MCF 10A (cell line): ENCODE measurements at regions of chr19 and their contacts with region 1.

Region 1: GRCh38 chr19:43747557-43748204 is 7.1 kb downstream of the SMG9 start:
- DNase-seq: no peak
- H3K4me3 Mint-ChIP-seq: no peak overlapping the region
- H3K27ac Mint-ChIP-seq: no peak overlapping the region
- H3K4me1 Mint-ChIP-seq: peaks cover 32% of the 10 kb centered on the region
- H3K27me3 Mint-ChIP-seq: no peaks in the 10 kb centered on the region
- CTCF ChIP-seq: no peak

Region 2: DNA sequence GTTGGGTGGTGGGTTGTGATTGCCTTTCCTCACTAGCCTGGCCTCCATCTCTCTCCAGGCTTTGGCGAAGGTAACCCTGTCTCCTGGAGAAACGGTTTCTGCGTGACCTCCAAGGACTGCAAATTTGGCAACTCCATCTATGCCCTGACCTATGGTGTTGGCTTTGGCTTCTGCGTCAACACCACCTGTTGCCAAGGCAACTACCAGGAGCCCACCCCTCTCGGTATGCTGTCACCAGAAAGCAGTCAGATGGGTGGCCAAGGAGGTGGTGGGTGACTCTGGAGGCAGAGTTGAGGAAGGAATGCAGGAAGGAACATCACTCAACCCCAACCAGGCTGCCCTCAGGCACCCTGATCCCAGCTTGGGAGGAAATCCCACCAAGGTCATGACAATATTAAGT is 50.4 kb before region 1 on chr19:
- CTCF ChIA-PET with region 1: no interaction called
- POLR2A ChIA-PET with region 1: no interaction called
- intact Hi-C with region 1: no loop called
- DNase-seq: no peak
- H3K4me3 Mint-ChIP-seq: no peak overlapping the region
- H3K27ac Mint-ChIP-seq: no peak overlapping the region
- H3K4me1 Mint-ChIP-seq: peaks cover 16% of the 10 kb centered on the region
- H3K27me3 Mint-ChIP-seq: no peaks in the 10 kb centered on the region
- CTCF ChIP-seq: no peak

Region 3: DNA sequence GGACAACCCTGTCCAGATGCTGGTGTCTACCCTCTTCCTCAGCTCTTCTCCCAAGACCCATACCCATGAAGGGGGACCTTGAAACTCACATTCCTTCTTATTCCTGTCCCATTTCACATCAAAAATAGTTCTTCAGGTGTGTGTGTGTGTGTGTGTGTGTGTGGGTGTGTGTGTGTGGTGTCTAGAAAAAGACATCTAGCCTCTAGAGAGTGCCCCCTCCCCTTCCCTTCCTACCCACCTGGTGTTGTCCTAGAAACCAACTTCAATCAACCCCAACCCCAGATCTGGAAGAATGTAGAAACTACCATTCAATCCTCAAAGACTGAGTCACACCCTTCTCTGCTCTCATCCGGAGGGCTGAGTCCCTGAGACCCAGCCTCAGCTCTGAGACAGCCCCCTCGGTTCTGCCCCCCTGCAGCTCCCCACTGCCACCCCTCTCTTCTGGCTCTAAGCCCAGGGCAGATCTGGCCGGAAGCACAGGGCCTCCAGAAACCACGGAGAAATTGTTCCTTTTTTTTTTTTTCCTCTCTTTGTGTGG is 29.6 kb after region 1 on chr19:
- CTCF ChIA-PET with region 1: interaction called, 32 read pairs
- POLR2A ChIA-PET with region 1: interaction called, 409 read pairs
- intact Hi-C with region 1: no loop called
- DNase-seq: peak; percentile 60
- H3K4me3 Mint-ChIP-seq: peak overlapping the region; percentile 86
- H3K27ac Mint-ChIP-seq: peak overlapping the region; percentile 94
- H3K4me1 Mint-ChIP-seq: peaks cover 53% of the 10 kb centered on the region
- H3K27me3 Mint-ChIP-seq: no peaks in the 10 kb centered on the region
- CTCF ChIP-seq: no peak

Region 4: GRCh38 chr19:43784981-43785808 is 37.5 kb after region 1 on chr19:
- CTCF ChIA-PET with region 1: interaction called, 32 read pairs
- POLR2A ChIA-PET with region 1: interaction called, 409 read pairs
- intact Hi-C with region 1: loop called (anchors 1 kb)
- DNase-seq: peak; percentile 89
- H3K4me3 Mint-ChIP-seq: peak overlapping the region; percentile 86
- H3K27ac Mint-ChIP-seq: peak overlapping the region; percentile 90
- H3K4me1 Mint-ChIP-seq: peaks cover 63% of the 10 kb centered on the region
- H3K27me3 Mint-ChIP-seq: no peaks in the 10 kb centered on the region
- CTCF ChIP-seq: peak; percentile 92

Region 5: DNA sequence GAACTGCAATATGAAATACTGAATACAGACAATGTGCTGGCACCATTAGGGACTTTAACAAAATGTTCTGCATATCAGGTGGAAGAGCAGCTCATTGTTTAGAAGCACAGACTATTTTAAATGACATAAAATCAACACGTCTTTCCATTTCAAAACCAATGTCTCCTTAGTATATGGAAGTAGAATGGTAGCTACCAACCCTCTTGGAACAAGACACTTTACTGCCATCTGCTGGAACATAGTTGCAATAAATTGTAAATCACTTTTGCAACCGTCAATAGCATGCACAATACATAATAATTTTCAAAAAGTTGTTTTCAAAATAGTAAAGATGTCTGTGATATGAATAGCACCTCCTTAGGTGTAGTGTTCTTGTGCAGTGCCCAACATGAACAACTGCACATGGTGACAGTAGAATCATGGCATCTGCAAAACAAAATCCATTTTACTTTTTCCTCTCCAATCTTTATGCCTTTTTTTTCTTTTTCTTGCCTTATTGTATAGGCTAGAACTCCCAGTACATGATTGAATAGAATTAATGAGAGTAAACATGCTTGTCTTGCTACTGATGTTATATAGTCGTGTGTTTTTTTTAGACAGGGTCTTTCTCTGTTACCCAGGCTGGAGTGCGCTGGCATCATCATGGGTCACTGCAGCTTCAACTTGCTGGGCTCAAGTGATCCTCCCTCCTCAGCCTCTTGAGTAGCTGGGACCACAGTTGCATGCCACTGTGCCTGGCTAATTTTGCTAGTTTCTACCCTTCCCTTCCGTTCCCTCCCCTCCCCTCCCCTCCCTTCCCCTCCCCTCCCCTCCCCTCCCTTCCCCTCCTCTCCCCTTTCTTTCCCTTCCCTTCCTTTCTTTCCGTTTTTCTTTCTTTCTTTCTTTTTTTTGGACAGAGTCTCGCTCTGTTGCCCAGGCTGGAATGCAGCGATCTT is 62.3 kb after region 1 on chr19:
- CTCF ChIA-PET with region 1: interaction called, 41 read pairs
- POLR2A ChIA-PET with region 1: interaction called, 14 read pairs
- intact Hi-C with region 1: loop called (anchors 1 kb)
- DNase-seq: peak; percentile 74
- H3K4me3 Mint-ChIP-seq: no peak overlapping the region
- H3K27ac Mint-ChIP-seq: no peak overlapping the region
- H3K4me1 Mint-ChIP-seq: peaks cover 6% of the 10 kb centered on the region
- H3K27me3 Mint-ChIP-seq: peaks cover 11% of the 10 kb centered on the region
- CTCF ChIP-seq: peak; percentile 60

Region 6: GRCh38 chr19:43901395-43902390 is 154.0 kb after region 1 on chr19:
- CTCF ChIA-PET with region 1: no interaction called
- POLR2A ChIA-PET with region 1: no interaction called
- intact Hi-C with region 1: no loop called
- DNase-seq: peak; percentile 79
- H3K4me3 Mint-ChIP-seq: peak overlapping the region; percentile 76
- H3K27ac Mint-ChIP-seq: no peak overlapping the region
- H3K4me1 Mint-ChIP-seq: no peaks in the 10 kb centered on the region
- H3K27me3 Mint-ChIP-seq: no peaks in the 10 kb centered on the region
- CTCF ChIP-seq: no peak